Ascending aorta (tissue), 2 donors: ENCODE measurements at regions of chr4 and their contacts with region 1.

Region 1: DNA sequence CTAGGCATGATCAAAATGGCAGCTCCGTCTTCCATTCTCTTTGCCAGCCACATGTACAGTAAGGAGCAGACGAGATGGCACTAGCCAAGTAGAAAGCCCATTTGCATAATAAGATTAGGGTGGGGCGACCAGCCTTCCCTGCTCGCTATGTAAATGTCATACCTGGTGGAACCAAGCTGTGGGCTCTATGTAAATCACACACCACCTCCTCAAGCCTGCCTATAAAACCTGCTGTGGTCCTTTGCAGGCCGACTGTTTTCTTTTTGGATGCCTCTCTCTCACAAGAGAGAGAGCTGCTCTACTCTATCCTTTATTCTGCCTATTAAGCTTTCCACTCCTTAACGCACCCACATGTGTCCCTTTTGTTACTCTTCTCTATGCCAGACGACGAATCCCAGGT is 1472.7 kb downstream of the ARAP2 start:
- DNase-seq: no peak
- H3K4me3 ChIP-seq: no peak overlapping the region
- H3K27ac ChIP-seq: no peak overlapping the region
- H3K4me1 ChIP-seq: no peaks in the 10 kb centered on the region
- H3K27me3 ChIP-seq: no peaks in the 10 kb centered on the region
- CTCF ChIP-seq: no peak

Region 2: GRCh38 chr4:34826660-34827059 is 55.0 kb after region 1 on chr4:
- intact Hi-C with region 1: loop called (anchors 2 kb)
- DNase-seq: no peak
- H3K4me3 ChIP-seq: no peak overlapping the region
- H3K27ac ChIP-seq: no peak overlapping the region
- H3K4me1 ChIP-seq: no peaks in the 10 kb centered on the region
- H3K27me3 ChIP-seq: no peaks in the 10 kb centered on the region
- CTCF ChIP-seq: no peak

Region 3: GRCh38 chr4:35948171-35948570 is 1176.5 kb after region 1 on chr4:
- intact Hi-C with region 1: no loop called
- DNase-seq: no peak
- H3K4me3 ChIP-seq: no peak overlapping the region
- H3K27ac ChIP-seq: no peak overlapping the region
- H3K4me1 ChIP-seq: no peaks in the 10 kb centered on the region
- H3K27me3 ChIP-seq: no peaks in the 10 kb centered on the region
- CTCF ChIP-seq: no peak